Caco-2 (cell line): ENCODE measurements at regions of chr15 and their contacts with region 1.

Region 1: DNA sequence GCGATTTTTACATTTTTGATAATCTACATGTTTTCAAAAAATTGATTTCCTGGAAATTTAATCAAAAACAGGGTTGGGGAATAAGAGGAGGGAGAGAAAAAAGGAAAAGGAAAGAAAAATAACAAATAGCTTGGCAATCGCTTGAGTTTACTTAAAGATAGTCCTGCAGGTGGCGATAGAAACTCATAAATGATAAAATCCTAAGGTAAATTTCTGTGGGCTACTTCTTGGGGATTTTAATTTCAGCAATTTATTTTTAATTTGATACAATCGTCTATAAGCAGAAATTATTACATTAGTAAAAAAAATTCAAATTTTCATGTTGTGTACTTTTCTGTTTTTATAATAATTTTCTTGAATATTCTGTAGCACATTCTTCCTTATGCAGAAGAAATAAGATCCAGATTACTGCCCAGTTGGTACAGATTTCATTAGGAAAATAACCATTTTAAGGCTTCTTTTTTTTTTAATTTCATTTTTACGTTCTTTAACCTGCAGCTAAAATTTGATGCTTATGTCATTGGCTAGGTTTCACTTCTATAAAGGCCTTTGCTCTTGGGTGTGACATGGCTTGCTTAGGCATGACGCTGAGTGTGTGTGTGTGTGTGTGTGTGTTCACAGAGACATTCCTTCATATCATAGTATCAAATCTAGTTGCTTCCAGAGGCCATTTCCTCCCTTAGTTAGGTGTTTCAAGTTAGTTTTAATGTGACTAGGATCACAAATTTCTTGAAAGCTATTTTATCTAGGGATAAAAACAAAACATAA is 181.8 kb downstream of the MCTP2 start:
- DNase-seq: no peak
- H3K4me3 ChIP-seq: no peak overlapping the region
- H3K4me3 Mint-ChIP-seq: no peak overlapping the region
- H3K27ac Mint-ChIP-seq: no peak overlapping the region
- H3K4me1 ChIP-seq: no peaks in the 10 kb centered on the region
- H3K4me1 Mint-ChIP-seq: no peaks in the 10 kb centered on the region
- H3K27me3 ChIP-seq: no peaks in the 10 kb centered on the region
- H3K27me3 Mint-ChIP-seq: no peaks in the 10 kb centered on the region
- CTCF ChIP-seq: peak in 1 of 2 experiments; percentile 36

Region 2: DNA sequence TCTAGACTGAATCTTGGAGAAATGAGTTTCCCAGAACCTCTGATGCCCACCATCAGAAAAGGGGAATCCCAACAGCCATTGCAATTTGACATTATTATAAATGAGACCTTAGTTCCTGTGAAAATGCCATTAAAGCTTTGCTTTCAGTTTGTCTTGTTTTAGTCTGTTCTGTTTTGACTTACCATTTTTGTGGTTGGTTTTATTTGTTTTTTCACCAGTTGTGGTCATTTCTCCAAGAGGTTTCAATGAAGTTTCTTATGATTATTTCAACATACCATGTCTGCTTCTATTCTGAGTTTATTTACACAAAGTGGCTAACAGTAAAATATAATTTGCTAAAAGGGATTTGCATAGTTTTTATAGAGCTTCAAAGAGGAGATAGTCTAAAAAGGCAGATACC is 356.8 kb before region 1 on chr15:
- CTCF ChIA-PET with region 1: no interaction called
- POLR2A ChIA-PET with region 1: no interaction called
- intact Hi-C with region 1: no loop called
- DNase-seq: no peak
- H3K4me3 ChIP-seq: no peak overlapping the region
- H3K4me3 Mint-ChIP-seq: no peak overlapping the region
- H3K27ac Mint-ChIP-seq: no peak overlapping the region
- H3K4me1 ChIP-seq: 0 out of 2 replicates have a peak, but pooled peaks cover 4% of the 10 kb centered on the region
- H3K4me1 Mint-ChIP-seq: peaks cover 19% of the 10 kb centered on the region
- H3K27me3 ChIP-seq: no peaks in the 10 kb centered on the region
- H3K27me3 Mint-ChIP-seq: no peaks in the 10 kb centered on the region
- CTCF ChIP-seq: no peak

Region 3: GRCh38 chr15:94163999-94164807 is 249.0 kb before region 1 on chr15:
- CTCF ChIA-PET with region 1: no interaction called
- POLR2A ChIA-PET with region 1: no interaction called
- intact Hi-C with region 1: loop called (anchors 1 kb)
- DNase-seq: peak; percentile 53 to 80
- H3K4me3 ChIP-seq: no peak overlapping the region
- H3K4me3 Mint-ChIP-seq: no peak overlapping the region
- H3K27ac Mint-ChIP-seq: no peak overlapping the region
- H3K4me1 ChIP-seq: no peaks in the 10 kb centered on the region
- H3K4me1 Mint-ChIP-seq: no peaks in the 10 kb centered on the region
- H3K27me3 ChIP-seq: no peaks in the 10 kb centered on the region
- H3K27me3 Mint-ChIP-seq: peaks cover 2% of the 10 kb centered on the region
- CTCF ChIP-seq: peak; percentile 81 to 88

Region 4: DNA sequence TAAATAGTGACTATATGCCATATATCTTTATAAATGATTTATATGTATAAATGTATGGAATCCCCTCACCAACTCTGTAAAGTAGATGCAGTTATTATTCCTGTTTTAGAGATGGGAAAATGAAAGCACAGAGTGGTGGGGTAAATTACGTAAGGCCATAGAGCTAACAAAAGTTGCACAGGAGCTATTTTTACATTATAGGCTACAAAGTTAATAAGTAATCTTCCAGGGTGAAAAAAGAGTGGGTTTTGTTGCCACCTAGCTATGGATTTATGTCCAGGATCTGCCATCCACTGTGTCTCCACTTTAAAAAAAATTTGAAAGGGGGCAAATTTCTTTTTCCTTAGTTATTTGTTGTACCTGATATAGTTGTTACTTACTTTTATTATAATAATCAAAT is 53.9 kb after region 1 on chr15:
- CTCF ChIA-PET with region 1: interaction called, 15 read pairs
- POLR2A ChIA-PET with region 1: no interaction called
- intact Hi-C with region 1: loop called (anchors 1 kb)
- DNase-seq: peak in 1 of 2 experiments; percentile 22
- H3K4me3 ChIP-seq: no peak overlapping the region
- H3K4me3 Mint-ChIP-seq: no peak overlapping the region
- H3K27ac Mint-ChIP-seq: no peak overlapping the region
- H3K4me1 ChIP-seq: no peaks in the 10 kb centered on the region
- H3K4me1 Mint-ChIP-seq: no peaks in the 10 kb centered on the region
- H3K27me3 ChIP-seq: no peaks in the 10 kb centered on the region
- H3K27me3 Mint-ChIP-seq: no peaks in the 10 kb centered on the region
- CTCF ChIP-seq: peak in 1 of 2 experiments; percentile 32

Region 5: DNA sequence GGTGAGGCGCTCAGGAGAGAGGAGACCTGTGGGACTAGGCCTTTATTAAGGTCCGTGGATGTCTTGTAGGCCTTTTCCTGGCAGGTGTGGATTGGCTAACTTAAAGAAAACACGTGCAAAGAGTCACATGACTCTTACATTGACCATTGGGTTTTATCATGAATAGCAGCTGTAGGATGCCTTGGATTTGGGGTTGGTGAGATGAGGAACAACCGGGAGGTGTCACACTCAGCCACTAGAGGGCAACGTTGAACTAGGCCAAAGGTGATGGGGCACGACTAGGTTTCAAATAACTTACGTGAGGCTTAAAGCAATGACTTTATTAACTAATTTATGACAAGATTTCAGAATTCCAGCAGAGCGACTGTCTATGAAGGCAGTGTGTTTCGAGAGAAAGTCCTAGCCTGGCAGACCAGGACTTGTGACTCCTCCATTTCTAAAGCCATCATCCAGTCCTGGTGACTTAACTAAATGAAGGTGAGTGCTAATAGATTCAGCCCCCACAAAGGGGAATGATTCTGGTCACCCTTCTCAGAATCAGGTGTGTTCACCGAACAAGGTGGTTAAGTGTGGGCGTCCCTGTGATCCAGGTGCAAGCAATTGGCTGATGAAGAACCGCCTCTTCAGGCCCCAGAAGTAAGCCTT is 163.8 kb after region 1 on chr15:
- CTCF ChIA-PET with region 1: interaction called, 3 read pairs
- POLR2A ChIA-PET with region 1: no interaction called
- intact Hi-C with region 1: loop called (anchors 1 kb)
- DNase-seq: peak in 1 of 2 experiments; percentile 47
- H3K4me3 ChIP-seq: no peak overlapping the region
- H3K4me3 Mint-ChIP-seq: no peak overlapping the region
- H3K27ac Mint-ChIP-seq: no peak overlapping the region
- H3K4me1 ChIP-seq: no peaks in the 10 kb centered on the region
- H3K4me1 Mint-ChIP-seq: no peaks in the 10 kb centered on the region
- H3K27me3 ChIP-seq: no peaks in the 10 kb centered on the region
- H3K27me3 Mint-ChIP-seq: peaks cover 14% of the 10 kb centered on the region
- CTCF ChIP-seq: peak; percentile 49 to 59